ENCODE measurements at regions of chr12 and their contacts with region 1.

Region 1: DNA sequence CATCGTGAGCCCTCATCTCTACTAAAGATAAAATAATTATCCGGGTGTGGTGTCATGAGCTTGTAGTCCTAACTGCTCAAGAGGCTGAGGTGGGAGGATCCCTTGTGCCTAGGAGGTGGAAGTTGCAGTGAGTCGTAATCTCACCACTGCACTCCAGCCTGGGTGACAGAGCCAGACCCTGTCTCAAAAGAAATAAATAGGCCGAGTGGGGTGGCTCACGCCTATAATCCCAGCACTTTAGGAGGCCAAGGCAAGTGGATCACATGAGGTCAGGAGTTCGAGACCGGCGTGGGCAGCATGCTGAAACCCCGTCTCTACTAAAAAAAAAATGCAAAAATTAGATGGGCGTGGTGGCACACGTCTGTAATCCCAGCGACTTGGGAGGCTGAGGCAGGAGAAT is 70.9 kb downstream of the RESF1 start:
- DNase-seq: no peak
- H3K4me3 ChIP-seq: no peak overlapping the region
- H3K27ac ChIP-seq: no peak overlapping the region
- H3K4me1 ChIP-seq: no peaks in the 10 kb centered on the region
- H3K27me3 ChIP-seq: no peaks in the 10 kb centered on the region; the same call in 1 of the 2 replicates
- CTCF ChIP-seq: no peak

Region 2: GRCh38 chr12:31849090-31849687 is 181.0 kb before region 1 on chr12:
- CTCF ChIA-PET with region 1: no interaction called
- POLR2A ChIA-PET with region 1: no interaction called
- intact Hi-C with region 1: no loop called
- DNase-seq: no peak
- H3K4me3 ChIP-seq: no peak overlapping the region
- H3K27ac ChIP-seq: no peak overlapping the region
- H3K4me1 ChIP-seq: peaks cover 3% of the 10 kb centered on the region; the same call in 1 of the 2 replicates
- H3K27me3 ChIP-seq: no peaks in the 10 kb centered on the region
- CTCF ChIP-seq: no peak

Region 3: GRCh38 chr12:31959161-31959700 is 70.9 kb before region 1 on chr12 and contains the start of gene RESF1:
- CTCF ChIA-PET with region 1: no interaction called
- POLR2A ChIA-PET with region 1: no interaction called
- intact Hi-C with region 1: no loop called
- DNase-seq: peak; percentile 76 to 95
- H3K4me3 ChIP-seq: peak within 1 kb of the TSS; percentile 86
- H3K27ac ChIP-seq: peak within 1 kb of the TSS; percentile 45
- H3K4me1 ChIP-seq: peaks cover 12% of the 10 kb centered on the region
- H3K27me3 ChIP-seq: no peaks in the 10 kb centered on the region
- CTCF ChIP-seq: no peak
- total RNA-seq, gene RESF1: 25.4 and 33.8 TPM in 2 replicates

Region 4: GRCh38 chr12:32016680-32017482 is 13.3 kb before region 1 on chr12:
- CTCF ChIA-PET with region 1: interaction called, 17 read pairs
- POLR2A ChIA-PET with region 1: no interaction called
- intact Hi-C with region 1: no loop called
- DNase-seq: no peak
- H3K4me3 ChIP-seq: no peak overlapping the region
- H3K27ac ChIP-seq: no peak overlapping the region
- H3K4me1 ChIP-seq: no peaks in the 10 kb centered on the region
- H3K27me3 ChIP-seq: no peaks in the 10 kb centered on the region
- CTCF ChIP-seq: no peak

Region 5: DNA sequence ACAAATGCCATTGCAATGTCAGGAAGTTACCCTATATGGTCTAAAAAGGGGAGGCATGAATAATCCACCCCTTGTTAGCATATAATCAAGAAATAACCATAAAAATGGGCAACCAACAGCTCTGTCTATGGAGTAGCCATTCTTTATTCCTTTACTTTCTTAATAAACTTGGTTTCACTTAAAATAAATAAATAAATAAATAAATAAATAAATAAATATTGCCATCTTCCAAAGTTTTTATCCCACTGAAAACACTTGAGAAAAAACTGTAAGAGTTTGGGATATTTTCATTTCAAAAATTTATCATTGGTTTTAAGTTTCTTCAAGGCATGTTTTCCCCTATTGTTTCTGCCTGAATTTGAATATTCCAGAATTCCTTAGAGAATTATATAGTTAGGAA is 1319.6 kb after region 1 on chr12:
- CTCF ChIA-PET with region 1: no interaction called
- POLR2A ChIA-PET with region 1: no interaction called
- intact Hi-C with region 1: no loop called
- DNase-seq: no peak
- H3K4me3 ChIP-seq: no peak overlapping the region
- H3K27ac ChIP-seq: no peak overlapping the region
- H3K4me1 ChIP-seq: no peaks in the 10 kb centered on the region
- H3K27me3 ChIP-seq: no peaks in the 10 kb centered on the region
- CTCF ChIP-seq: no peak

Measured in PC-9 (cell line).